Activated T-helper 1 cell treated with anti-CD3 and anti-CD28 coated beads, Interleukin-12 subunit alpha, Interleukin-12 subunit beta, Interleukin-2, Interleukin-4 antibody, amounts not matched to agents 30 ng/mL and 10 ng/mL and 1 ng/mL, durations not matched to agents 14 hours and 24 hours and 36 hours (primary cell): ENCODE measurements at regions of chr20 and their contacts with region 1.

Region 1: GRCh38 chr20:47886460-47887041 is 101.3 kb upstream of the SULF2 start:
- DNase-seq: no peak
- H3K4me3 Mint-ChIP-seq: no peak overlapping the region
- H3K27ac Mint-ChIP-seq: no peak overlapping the region
- H3K4me1 Mint-ChIP-seq: no peaks in the 10 kb centered on the region
- H3K27me3 Mint-ChIP-seq: peaks cover 3% of the 10 kb centered on the region

Region 2: GRCh38 chr20:48112845-48113560 is 226.5 kb after region 1 on chr20:
- intact Hi-C with region 1: loop called (anchors 10 kb)
- DNase-seq: no peak
- H3K4me3 Mint-ChIP-seq: no peak overlapping the region
- H3K27ac Mint-ChIP-seq: no peak overlapping the region
- H3K4me1 Mint-ChIP-seq: no peaks in the 10 kb centered on the region
- H3K27me3 Mint-ChIP-seq: peaks cover 5% of the 10 kb centered on the region

Region 3: DNA sequence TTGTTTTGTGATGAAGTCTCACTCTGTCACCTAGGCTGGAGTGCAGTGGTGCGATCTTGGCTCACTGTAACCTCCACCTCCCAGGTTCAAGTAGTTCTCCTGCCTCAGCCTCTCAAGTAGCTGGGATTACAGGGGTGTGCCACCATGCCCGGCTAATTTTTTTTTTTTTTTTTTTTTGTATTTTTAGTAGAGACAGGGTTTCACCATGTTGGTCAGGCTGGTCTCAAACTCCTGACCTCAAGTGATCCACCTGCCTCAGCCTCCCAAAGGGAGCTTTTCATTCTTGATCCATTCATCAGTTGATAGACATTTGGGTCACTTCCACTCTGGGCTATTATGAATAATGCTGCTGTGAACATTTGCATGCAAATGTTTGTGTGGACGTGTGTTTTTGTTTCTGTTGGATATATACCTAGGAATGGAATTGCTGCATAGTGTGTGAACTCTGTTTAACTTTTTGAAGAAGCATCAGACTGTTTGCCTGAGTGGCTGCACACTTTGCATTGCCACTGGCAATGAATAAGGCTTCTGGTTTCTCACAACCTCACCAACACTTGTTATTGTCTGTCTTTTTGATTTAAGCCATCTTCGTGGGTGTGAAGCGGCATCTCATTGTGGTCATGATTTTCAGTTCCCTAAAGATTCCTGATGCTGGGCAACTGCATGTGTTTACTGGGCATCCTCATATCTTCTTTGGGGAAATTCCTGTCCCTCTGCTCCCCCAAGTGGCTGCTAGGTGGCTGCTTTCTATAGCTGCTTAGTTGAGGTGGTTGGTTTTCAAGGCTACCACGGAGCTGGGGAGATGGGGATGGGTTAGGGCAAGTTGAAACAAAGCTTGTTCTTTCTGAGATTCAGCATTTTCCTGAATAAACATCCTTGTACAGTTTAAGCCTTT is 302.4 kb after region 1 on chr20:
- intact Hi-C with region 1: no loop called
- DNase-seq: no peak
- H3K4me3 Mint-ChIP-seq: no peak overlapping the region
- H3K27ac Mint-ChIP-seq: no peak overlapping the region
- H3K4me1 Mint-ChIP-seq: no peaks in the 10 kb centered on the region
- H3K27me3 Mint-ChIP-seq: no peaks in the 10 kb centered on the region